ENCODE measurements at regions of chrX and their contacts with region 1.

Region 1: DNA sequence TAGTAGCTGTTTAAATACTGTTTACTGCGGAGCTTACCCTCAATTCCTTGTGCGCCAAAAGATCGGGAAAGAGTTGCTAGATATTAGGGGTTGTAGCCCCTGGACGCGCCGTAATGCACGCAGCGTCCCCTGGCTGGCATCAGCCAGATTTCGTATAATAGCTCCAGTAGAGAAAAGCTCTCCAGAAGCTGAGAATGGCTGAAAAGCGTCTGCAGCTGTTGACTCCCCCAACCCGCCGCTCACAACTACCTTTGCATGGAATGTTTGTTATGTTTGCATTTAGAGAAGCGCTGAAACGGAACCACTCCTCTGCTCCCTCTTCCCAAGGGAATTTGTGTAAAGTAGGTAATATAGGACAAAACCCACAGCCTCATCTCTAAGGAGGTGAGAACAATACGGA is 3.7 kb downstream of the DOCK11 start:
- DNase-seq: peak; percentile 39
- ATAC-seq: peak; percentile 12
- H3K4me3 Mint-ChIP-seq: peak overlapping the region; percentile 52
- H3K27ac Mint-ChIP-seq: peak overlapping the region; percentile 87
- H3K4me1 Mint-ChIP-seq: peaks cover 49% of the 10 kb centered on the region
- H3K27me3 Mint-ChIP-seq: peaks cover 20% of the 10 kb centered on the region
- CTCF ChIP-seq: no peak

Region 2: GRCh38 chrX:118459494-118459893 is 39.8 kb before region 1 on chrX:
- CTCF ChIA-PET with region 1: interaction called, 18 read pairs
- POLR2A ChIA-PET with region 1: interaction called, 3 read pairs
- DNase-seq: no peak
- ATAC-seq: peak; percentile 77
- H3K4me3 Mint-ChIP-seq: no peak overlapping the region
- H3K27ac Mint-ChIP-seq: no peak overlapping the region
- H3K4me1 Mint-ChIP-seq: 0 out of 2 replicates have a peak, but pooled peaks cover 4% of the 10 kb centered on the region
- H3K27me3 Mint-ChIP-seq: no peaks in the 10 kb centered on the region; the same call in 1 of the 2 replicates
- CTCF ChIP-seq: no peak

Region 3: GRCh38 chrX:118513120-118513898 is 14.0 kb after region 1 on chrX:
- CTCF ChIA-PET with region 1: interaction called, 12 read pairs
- POLR2A ChIA-PET with region 1: no interaction called
- DNase-seq: no peak
- ATAC-seq: no peak
- H3K4me3 Mint-ChIP-seq: no peak overlapping the region
- H3K27ac Mint-ChIP-seq: no peak overlapping the region
- H3K4me1 Mint-ChIP-seq: peaks cover 8% of the 10 kb centered on the region
- H3K27me3 Mint-ChIP-seq: no peaks in the 10 kb centered on the region
- CTCF ChIP-seq: no peak

Region 4: DNA sequence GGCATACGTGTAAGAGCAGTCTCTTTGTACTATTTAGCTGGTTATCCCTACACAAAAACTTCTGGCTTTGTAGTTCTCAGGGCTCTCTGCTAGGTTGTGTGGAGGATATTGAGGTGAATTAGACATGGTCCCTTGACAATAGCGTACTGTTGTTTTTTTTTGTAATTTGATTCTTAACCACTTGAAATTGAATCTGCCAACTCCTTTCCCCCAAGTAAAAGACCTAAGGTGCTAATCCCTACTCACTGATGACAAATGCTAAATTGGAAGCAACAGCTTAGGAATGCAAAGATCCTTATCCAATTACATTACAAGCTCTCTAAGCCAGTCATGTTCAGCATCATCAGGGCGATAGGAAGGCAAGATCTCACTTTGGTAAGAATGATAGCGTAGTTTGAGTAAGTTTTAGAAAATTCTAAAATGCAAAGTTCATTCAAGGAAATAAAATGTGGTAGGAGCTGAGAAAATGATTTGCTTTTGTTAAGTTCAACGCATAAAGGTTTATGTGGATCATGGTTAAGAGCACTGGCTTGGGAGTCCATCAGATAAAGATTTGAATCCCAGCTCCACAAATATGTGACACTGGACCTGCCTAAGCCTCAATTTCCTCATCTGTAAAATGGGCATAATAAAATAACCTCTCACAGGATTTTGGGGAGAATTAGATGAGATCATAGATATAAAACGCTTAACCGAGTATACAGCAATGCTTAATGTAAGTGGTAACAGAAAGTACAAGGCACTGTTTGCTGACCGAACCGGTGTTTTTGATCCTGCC is 35.6 kb after region 1 on chrX:
- CTCF ChIA-PET with region 1: interaction called, 12 read pairs
- POLR2A ChIA-PET with region 1: interaction called, 5 read pairs
- DNase-seq: no peak
- ATAC-seq: peak; percentile 71
- H3K4me3 Mint-ChIP-seq: peak overlapping the region; percentile 47
- H3K27ac Mint-ChIP-seq: peak overlapping the region; percentile 94
- H3K4me1 Mint-ChIP-seq: peaks cover 46% of the 10 kb centered on the region
- H3K27me3 Mint-ChIP-seq: no peaks in the 10 kb centered on the region
- CTCF ChIP-seq: no peak

Region 5: DNA sequence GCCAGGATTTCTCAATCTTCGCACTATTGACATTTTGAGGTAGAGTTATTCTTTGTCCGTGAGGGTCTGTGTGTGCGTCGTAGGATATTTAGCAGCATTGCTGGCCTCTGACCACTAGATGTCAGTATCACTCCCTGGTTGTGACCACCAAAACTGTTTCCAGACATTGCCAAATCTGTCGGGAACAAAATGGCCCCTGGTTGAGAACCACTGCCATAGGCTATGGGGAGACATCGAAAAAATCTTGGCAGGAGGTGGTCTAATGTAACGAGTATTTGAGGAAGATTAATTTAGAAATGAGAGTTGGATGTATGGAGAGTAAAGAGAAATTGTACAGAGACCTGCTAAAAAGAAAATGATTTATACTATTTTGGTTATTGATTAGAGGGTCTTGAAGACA is 104.7 kb after region 1 on chrX:
- CTCF ChIA-PET with region 1: interaction called, 17 read pairs
- POLR2A ChIA-PET with region 1: no interaction called
- DNase-seq: peak; percentile 41
- ATAC-seq: peak; percentile 77
- H3K4me3 Mint-ChIP-seq: no peak overlapping the region
- H3K27ac Mint-ChIP-seq: no peak overlapping the region
- H3K4me1 Mint-ChIP-seq: peaks cover 3% of the 10 kb centered on the region; the same call in 1 of the 2 replicates
- H3K27me3 Mint-ChIP-seq: no peaks in the 10 kb centered on the region
- CTCF ChIP-seq: peak; percentile 27; the same call in 1 of the 2 replicates